Posterior vena cava (tissue), 2 donors: ENCODE measurements at regions of chr3 and their contacts with region 1.

Region 1: GRCh38 chr3:58419780-58420507 is 13.7 kb downstream of the PDHB start:
- DNase-seq: peak; percentile 88

Region 2: DNA sequence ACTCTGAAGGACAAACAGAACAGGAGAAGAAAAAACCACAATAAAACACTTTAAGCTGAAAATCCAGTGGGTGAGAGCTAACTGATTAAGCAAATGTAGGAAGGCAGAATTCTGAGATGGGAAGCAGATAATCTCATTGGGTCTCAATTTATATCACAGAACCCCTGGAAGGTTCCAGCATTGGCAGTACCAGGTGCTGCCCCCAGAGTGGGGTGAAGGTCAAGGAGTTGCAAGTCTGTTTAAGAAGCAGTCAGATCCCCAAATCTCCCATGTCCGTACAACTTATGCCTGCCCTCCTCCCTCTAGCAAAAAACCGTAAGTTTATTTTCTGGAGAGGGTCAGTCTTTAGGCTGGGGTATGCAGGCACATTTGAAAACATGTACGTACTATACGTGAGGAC is 42.2 kb before region 1 on chr3:
- intact Hi-C with region 1: loop called in 1 of 2 experiments (anchors 2 kb)
- DNase-seq: no peak

Region 3: DNA sequence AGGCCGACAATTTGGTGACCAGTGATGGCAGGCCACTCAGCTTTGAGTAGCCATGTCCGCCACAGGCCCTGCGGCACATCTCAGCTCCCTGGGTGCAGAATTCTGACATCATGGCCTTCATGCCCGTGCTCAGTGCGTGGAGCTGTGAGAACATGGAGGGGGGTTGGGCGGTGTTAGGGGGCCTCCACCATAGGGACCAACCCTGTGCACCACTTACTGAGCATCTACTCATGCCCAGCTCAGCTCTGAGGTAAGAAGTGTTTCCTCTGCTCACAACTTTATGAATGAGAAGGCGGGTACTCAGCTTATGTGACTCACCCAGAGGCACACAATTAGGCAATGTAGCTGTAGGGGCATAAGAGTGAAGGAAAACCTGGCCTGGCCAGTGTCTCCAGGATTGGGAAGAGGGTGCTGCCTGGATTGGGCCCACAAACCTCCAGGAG is 106.6 kb after region 1 on chr3:
- intact Hi-C with region 1: loop called in 1 of 2 experiments (anchors 10 kb)
- DNase-seq: no peak

Region 4: GRCh38 chr3:58804914-58805313 is 385.0 kb after region 1 on chr3:
- intact Hi-C with region 1: no loop called
- DNase-seq: no peak

Region 5: DNA sequence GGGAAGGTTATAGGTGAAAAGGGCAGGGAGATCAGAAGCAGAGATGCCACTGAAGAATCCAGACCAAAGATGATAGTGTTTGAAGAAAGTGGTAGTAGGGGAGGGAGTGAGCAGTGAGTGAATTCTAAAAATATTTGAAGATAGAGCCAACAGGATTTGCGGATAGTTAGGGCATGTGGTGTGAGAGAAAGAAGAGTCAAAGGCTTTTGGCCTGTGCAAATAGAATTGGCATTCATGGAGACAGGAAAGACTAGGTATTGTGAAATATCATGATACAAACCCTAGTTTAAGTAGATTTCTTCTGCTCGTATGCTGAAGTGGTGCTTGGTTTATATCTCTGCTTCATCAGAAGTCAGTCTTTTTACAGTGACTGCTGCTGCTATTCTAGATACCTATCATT is 854.0 kb after region 1 on chr3:
- intact Hi-C with region 1: no loop called
- DNase-seq: no peak